ENCODE measurements at regions of chrX and their contacts with region 1.

Region 1: GRCh38 chrX:76279000-76279399 is 106.1 kb downstream of the PBDC1 start:
- DNase-seq: peak; percentile 18 to 66 (median 55)
- H3K4me3 ChIP-seq: no peak overlapping the region
- H3K27ac ChIP-seq: no peak overlapping the region
- H3K4me1 ChIP-seq: no peaks in the 10 kb centered on the region
- H3K27me3 ChIP-seq: no peaks in the 10 kb centered on the region

Region 2: DNA sequence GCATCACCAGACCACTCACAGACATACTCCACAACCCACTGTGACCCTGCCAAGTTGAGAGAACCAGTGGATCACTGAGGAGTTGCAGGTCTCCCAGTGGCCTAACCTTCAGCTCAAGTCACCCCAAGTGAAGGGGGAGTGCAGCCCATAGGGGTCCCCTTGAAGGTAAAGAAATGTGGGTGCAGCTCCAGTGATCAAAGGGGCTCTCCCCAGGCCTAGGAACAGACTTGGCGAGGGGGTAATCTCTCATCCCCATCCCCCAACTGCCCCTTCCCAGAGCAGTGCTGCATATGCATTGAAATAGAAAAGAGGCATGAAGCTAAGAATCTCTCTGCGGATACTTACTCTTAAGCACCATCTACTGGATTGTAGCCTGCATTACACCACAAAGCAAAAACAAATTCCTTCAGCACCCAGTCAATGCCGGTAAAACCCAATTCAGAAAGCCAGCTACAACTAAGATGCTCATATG is 175.5 kb after region 1 on chrX:
- CTCF ChIA-PET with region 1: interaction called, 21 read pairs
- POLR2A ChIA-PET with region 1: no interaction called
- DNase-seq: peak in 2 of 3 donors; percentile 39 to 49
- H3K4me3 ChIP-seq: no peak overlapping the region
- H3K27ac ChIP-seq: no peak overlapping the region
- H3K4me1 ChIP-seq: no peaks in the 10 kb centered on the region
- H3K27me3 ChIP-seq: no peaks in the 10 kb centered on the region